Ovary (tissue), 10 donors: ENCODE measurements at regions of chr4 and their contacts with region 1.

Region 1: GRCh38 chr4:5368426-5368825 is 317.1 kb downstream of the STK32B start:
- DNase-seq: no peak
- H3K4me3 ChIP-seq: no peak overlapping the region
- H3K27ac ChIP-seq: no peak overlapping the region
- H3K4me1 ChIP-seq: no peaks in the 10 kb centered on the region
- H3K27me3 ChIP-seq: no peaks in the 10 kb centered on the region
- CTCF ChIP-seq: no peak
- EP300 ChIP-seq: no peak
- POLR2A ChIP-seq: no peak

Region 2: GRCh38 chr4:5389756-5390310 is 21.4 kb after region 1 on chr4:
- intact Hi-C with region 1: loop called in 1 of 4 experiments (anchors 2 kb)
- DNase-seq: no peak
- H3K4me3 ChIP-seq: no peak overlapping the region
- H3K27ac ChIP-seq: no peak overlapping the region
- H3K4me1 ChIP-seq: no peaks in the 10 kb centered on the region
- H3K27me3 ChIP-seq: no peaks in the 10 kb centered on the region
- CTCF ChIP-seq: no peak
- EP300 ChIP-seq: no peak
- POLR2A ChIP-seq: no peak